ENCODE measurements at regions of chr13 and their contacts with region 1.

Region 1: GRCh38 chr13:45799451-45799850 is 52.1 kb downstream of the SIAH3 start:
- DNase-seq: no peak
- H3K4me3 ChIP-seq: no peak overlapping the region
- H3K27me3 ChIP-seq: no peaks in the 10 kb centered on the region
- CTCF ChIP-seq: no peak

Region 2: DNA sequence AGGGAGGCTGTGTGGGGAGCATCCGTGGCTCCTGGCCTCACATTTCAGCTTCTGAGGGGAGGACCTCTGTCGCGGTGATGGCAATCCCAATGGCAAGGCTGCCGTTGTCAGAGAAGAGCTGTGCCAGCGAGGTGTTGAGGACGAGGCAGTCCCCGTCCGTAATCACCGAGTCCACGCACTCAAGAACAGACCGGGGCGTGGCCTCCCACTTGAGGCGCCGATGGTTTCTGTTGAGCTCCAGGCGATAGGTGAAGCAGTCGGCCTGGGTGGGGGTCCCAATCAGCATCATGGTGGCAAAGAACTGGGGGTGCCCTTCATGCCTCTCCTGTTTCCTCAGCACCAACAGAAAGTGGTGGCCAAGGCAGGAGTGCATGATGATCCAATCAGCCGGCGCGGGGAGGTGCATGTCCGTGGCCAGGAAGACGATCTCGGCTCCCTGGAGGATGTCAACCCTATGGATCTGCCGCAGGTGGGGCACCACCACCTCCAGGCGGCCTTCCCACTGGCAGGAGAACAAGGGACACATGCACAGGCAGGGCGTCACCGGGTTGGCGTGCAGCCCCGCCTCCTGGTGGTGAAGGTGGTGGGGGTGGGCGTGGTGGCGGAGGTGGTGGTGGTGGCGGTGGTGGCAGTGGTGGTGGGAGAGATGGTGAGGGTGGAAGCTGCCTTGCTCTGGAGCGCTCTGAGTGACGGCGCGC is 16.0 kb before region 1 on chr13:
- CTCF ChIA-PET with region 1: no interaction called
- POLR2A ChIA-PET with region 1: interaction called, 12 read pairs
- DNase-seq: no peak
- H3K4me3 ChIP-seq: no peak overlapping the region
- H3K27me3 ChIP-seq: peaks cover 2% of the 10 kb centered on the region; the same call in 1 of the 2 replicates
- CTCF ChIP-seq: no peak

Region 3: GRCh38 chr13:45817833-45818232 is 18.4 kb after region 1 on chr13:
- CTCF ChIA-PET with region 1: no interaction called
- POLR2A ChIA-PET with region 1: no interaction called
- DNase-seq: no peak
- H3K4me3 ChIP-seq: no peak overlapping the region
- H3K27me3 ChIP-seq: peaks cover 5% of the 10 kb centered on the region
- CTCF ChIP-seq: no peak